A673 (cell line): ENCODE measurements at regions of chr12 and their contacts with region 1.

Region 1: DNA sequence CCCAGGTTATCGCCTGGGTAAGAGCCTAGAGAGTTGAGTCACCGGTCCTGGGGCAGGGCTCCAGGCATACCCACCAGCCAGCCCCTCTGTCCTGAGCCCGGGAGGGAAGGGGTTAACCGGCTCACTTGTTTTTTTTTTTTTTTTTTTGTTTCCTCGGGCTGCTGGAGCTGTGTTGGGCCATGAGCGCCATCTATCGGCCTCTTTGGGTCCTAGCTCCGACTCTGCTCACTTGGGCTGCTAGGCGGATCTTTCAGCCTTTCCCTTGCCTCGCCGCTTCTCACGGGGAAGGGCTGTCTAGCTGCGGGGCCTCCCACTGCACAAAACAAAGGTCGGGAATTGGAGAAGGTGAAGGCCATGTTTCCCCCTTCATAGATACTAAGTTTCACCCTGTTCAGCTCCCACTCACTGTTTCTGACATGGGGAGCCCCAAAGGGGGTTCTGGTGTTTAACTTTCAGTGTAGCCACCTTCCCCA is 2.8 kb upstream of the SMUG1 start:
- DNase-seq: peak; percentile 91
- H3K4me3 ChIP-seq: no peak overlapping the region
- H3K27ac ChIP-seq: no peak overlapping the region
- H3K4me1 ChIP-seq: peaks cover 34% of the 10 kb centered on the region
- H3K27me3 ChIP-seq: no peaks in the 10 kb centered on the region
- CTCF ChIP-seq: peak; percentile 91

Region 2: GRCh38 chr12:53739214-53740129 is 452.1 kb before region 1 on chr12:
- CTCF ChIA-PET with region 1: interaction called, 12 read pairs
- POLR2A ChIA-PET with region 1: no interaction called
- intact Hi-C with region 1: no loop called
- DNase-seq: peak; percentile 70
- H3K4me3 ChIP-seq: peak overlapping the region; percentile 29
- H3K27ac ChIP-seq: no peak overlapping the region
- H3K4me1 ChIP-seq: peaks cover 30% of the 10 kb centered on the region
- H3K27me3 ChIP-seq: peaks cover 3% of the 10 kb centered on the region
- CTCF ChIP-seq: no peak

Region 3: GRCh38 chr12:54207484-54208294 is 16.1 kb after region 1 on chr12:
- CTCF ChIA-PET with region 1: interaction called, 11 read pairs
- POLR2A ChIA-PET with region 1: no interaction called
- intact Hi-C with region 1: no loop called
- DNase-seq: peak; percentile 73
- H3K4me3 ChIP-seq: no peak overlapping the region
- H3K27ac ChIP-seq: no peak overlapping the region
- H3K4me1 ChIP-seq: no peaks in the 10 kb centered on the region
- H3K27me3 ChIP-seq: no peaks in the 10 kb centered on the region
- CTCF ChIP-seq: peak; percentile 97